ENCODE measurements at regions of chr3 and their contacts with region 1.

Region 1: GRCh38 chr3:47910777-47911440 is 105.3 kb downstream of the MAP4 start:
- DNase-seq: peak; percentile 32
- H3K4me3 ChIP-seq: no peak overlapping the region
- H3K27ac ChIP-seq: no peak overlapping the region
- H3K4me1 ChIP-seq: no peaks in the 10 kb centered on the region
- H3K27me3 ChIP-seq: no peaks in the 10 kb centered on the region
- CTCF ChIP-seq: no peak

Region 2: DNA sequence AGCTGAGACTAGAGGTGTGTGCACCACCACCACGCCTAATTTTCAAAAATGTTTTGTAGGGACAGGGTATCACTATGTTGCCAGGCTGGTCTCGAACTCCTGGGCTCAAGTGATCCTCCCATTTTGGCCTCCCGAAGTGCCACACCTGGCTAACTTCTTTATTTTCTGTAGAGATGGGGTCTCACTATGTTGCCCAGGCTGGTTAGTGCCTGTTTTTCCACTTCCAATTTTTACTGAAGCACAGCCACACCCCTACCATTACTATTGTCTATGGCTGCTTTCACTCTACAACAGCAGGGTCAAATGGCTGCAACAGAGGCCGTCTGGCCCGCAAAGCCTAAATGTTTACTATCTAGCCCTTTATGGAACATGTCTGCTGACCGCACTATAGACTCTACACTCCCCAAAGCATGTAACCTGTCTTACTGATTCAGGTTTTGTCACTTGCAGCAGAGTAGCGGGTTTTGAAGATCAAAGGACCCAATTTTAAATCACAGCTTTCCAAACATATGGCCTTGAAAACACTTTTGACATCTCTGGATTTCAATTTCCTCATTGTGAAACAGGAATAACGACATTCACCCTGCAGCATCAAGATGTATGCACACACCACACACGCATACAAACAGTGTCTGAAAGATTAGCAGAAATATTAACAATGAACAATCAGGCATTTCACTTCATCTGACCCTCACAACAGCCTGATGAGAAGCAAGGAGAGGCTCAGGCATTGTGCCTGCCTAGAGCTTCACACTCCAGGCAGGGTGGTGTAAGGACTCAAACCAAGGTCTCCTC is 481.2 kb before region 1 on chr3:
- CTCF ChIA-PET with region 1: no interaction called
- POLR2A ChIA-PET with region 1: no interaction called
- intact Hi-C with region 1: no loop called
- DNase-seq: no peak
- H3K4me3 ChIP-seq: no peak overlapping the region
- H3K27ac ChIP-seq: no peak overlapping the region
- H3K4me1 ChIP-seq: no peaks in the 10 kb centered on the region
- H3K27me3 ChIP-seq: no peaks in the 10 kb centered on the region
- CTCF ChIP-seq: no peak

Region 3: DNA sequence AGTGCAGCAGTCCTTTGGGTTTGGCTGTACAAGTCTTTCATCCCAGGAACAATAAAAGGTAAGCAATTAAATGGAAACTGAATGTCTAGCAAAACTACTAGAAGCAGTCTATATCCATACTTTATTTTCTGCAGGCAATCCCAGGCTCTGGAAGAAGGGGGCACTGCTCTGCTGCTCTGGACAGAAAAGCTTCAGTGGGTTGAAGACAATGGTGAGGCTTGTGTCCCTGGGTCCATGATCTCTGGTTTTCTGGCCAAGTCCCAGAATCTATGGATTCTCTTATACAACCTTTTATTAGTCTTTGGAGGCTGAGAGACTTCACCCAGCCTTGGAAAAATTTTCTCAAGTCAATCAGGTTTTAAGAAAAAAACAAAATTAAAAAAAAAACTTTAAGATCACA is 470.8 kb before region 1 on chr3:
- CTCF ChIA-PET with region 1: no interaction called
- POLR2A ChIA-PET with region 1: interaction called, 20 read pairs
- intact Hi-C with region 1: no loop called
- DNase-seq: no peak
- H3K4me3 ChIP-seq: no peak overlapping the region
- H3K27ac ChIP-seq: no peak overlapping the region
- H3K4me1 ChIP-seq: no peaks in the 10 kb centered on the region
- H3K27me3 ChIP-seq: no peaks in the 10 kb centered on the region
- CTCF ChIP-seq: 0 out of 2 replicates have a peak, but pooled peaks have one; percentile 23

Region 4: GRCh38 chr3:47780741-47781684 is 129.9 kb before region 1 on chr3:
- CTCF ChIA-PET with region 1: no interaction called
- POLR2A ChIA-PET with region 1: no interaction called
- intact Hi-C with region 1: no loop called
- DNase-seq: peak; percentile 33
- H3K4me3 ChIP-seq: peak overlapping the region; percentile 75
- H3K27ac ChIP-seq: peak overlapping the region; percentile 93
- H3K4me1 ChIP-seq: no peaks in the 10 kb centered on the region
- H3K27me3 ChIP-seq: no peaks in the 10 kb centered on the region
- CTCF ChIP-seq: no peak

Region 5: GRCh38 chr3:48107227-48107626 is 196.3 kb after region 1 on chr3:
- CTCF ChIA-PET with region 1: no interaction called
- POLR2A ChIA-PET with region 1: interaction called, 10 read pairs
- intact Hi-C with region 1: no loop called
- DNase-seq: no peak
- H3K4me3 ChIP-seq: no peak overlapping the region
- H3K27ac ChIP-seq: no peak overlapping the region
- H3K4me1 ChIP-seq: no peaks in the 10 kb centered on the region
- H3K27me3 ChIP-seq: no peaks in the 10 kb centered on the region
- CTCF ChIP-seq: no peak